Mucosa of descending colon (tissue), 3 donors: ENCODE measurements at regions of chr2 and their contacts with region 1.

Region 1: DNA sequence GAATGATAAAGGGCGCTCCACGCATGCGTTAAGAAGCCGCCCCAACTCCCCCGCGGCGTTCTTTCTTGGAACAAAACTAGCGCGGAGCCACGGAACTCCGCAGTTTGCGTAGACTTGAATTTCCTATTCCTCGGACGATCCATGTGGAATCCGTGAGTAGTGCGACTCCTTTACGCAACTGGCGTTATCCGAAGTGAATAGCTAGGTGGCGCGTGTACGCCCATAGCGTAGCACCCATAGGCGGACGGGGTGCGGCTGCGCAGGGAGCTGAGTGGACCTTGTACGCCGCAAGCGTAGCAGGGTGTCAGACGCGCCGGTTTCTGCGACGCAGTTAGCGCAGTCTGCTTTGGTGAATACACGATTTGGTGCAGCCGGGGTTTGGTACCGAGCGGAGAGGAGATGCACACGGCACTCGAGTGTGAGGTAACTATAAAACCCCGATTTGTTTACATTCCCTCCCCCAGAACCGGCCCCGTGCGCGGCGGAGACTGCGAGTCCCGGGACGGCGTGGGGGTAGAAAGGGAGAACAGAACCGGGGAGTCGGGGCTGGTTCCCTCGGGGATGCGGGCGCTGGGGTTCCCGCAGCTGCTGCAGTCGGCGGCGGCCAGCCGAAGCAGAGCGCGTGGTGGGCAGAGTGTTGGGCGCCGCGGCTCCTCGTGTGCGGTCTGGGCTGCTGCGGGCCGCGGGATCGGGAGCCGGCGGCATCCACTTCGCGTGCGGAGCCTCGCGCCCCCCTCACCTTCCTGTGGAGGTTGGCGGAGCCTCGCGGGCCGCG is at the start of gene SLC39A10:
- DNase-seq: peak; percentile 99
- ATAC-seq: peak; percentile 95
- H3K4me3 ChIP-seq: peak within 1 kb of the TSS; percentile 99
- H3K4me1 ChIP-seq: peaks cover 26% of the 10 kb centered on the region
- CTCF ChIP-seq: peak; percentile 43
- total RNA-seq, gene SLC39A10: 15.3 to 22.6 (median 18.6) TPM

Region 2: DNA sequence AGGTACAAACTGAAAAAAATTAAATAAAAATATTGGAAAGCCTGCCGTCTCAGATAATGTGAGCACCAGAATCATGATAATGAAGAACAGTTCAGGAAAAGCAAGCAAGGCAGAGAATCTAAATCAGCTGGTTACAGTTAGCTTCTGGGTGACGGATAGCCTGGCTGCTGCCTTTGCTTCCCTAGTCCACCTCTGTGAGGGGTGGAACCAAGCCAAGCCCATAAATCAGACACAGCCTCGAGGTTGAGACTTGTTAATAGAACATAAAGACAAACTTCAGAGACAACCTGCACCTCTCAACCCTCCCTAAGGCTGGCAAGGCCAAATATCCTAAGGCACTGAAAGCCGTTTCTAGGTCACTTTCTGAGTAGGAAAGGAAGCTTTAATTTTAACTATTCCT is 334.7 kb before region 1 on chr2:
- intact Hi-C with region 1: loop called in 1 of 2 experiments (anchors 2 kb)
- DNase-seq: peak; percentile 42 to 71 (median 43)
- ATAC-seq: peak; percentile 54
- H3K4me3 ChIP-seq: no peak overlapping the region
- H3K4me1 ChIP-seq: peaks cover 10% of the 10 kb centered on the region
- CTCF ChIP-seq: no peak

Region 3: GRCh38 chr2:195520671-195521155 is 136.3 kb before region 1 on chr2:
- intact Hi-C with region 1: no loop called
- DNase-seq: no peak
- ATAC-seq: no peak
- H3K4me3 ChIP-seq: no peak overlapping the region
- H3K4me1 ChIP-seq: no peaks in the 10 kb centered on the region
- CTCF ChIP-seq: no peak

Region 4: GRCh38 chr2:195575879-195576401 is 81.1 kb before region 1 on chr2:
- intact Hi-C with region 1: loop called in 1 of 2 experiments (anchors 5 kb)
- DNase-seq: no peak
- ATAC-seq: peak; percentile 56
- H3K4me3 ChIP-seq: no peak overlapping the region
- H3K4me1 ChIP-seq: peaks cover 4% of the 10 kb centered on the region
- CTCF ChIP-seq: no peak

Region 5: DNA sequence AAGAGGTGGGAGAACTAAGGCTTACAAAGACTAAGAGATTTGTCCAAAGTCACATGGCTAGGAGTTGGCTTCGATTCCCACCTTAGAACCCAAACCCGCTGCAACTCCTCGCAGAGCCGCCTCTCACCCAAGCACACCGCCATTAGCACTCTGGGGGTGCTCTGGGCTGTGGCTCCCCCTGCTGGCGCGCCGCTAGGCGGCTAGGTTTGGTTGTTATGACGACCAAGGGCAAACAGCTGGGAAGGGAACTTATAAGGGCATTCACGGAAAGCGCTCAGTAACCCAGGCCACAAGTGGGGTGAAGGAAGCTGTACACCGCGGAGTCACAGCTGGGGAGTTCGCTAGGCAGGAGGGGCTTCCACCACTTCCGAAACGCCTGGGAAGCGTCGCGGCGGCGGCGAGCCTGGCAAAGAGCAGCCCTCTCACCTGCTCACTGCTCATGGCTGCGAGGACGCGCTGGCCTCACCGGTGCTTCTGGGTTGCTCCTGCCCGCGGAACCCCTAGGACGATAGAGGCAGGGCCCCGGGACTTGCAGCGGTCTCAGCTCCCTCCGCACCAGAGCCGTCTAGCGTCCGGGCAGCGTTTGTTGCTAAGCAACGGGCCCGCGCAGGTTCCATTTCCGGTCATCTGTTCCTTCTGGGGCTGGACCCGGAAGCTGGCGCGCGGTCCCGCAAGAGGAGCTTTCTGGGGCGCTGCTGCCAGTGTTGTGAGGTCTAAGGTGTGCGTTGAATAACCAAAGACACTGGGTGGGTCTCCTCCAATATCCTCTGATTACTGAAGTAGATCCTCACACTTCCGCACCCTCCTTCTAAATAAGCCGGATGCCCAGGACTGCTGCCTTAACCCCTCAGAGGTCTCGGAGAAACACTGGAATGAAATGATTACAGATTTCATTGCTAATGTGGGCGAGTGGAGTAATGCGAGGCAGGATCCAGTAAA is 411.5 kb after region 1 on chr2 and contains the start of gene DNAH7:
- intact Hi-C with region 1: loop called in 1 of 2 experiments (anchors 5 kb)
- DNase-seq: peak; percentile 94
- ATAC-seq: peak; percentile 98
- H3K4me3 ChIP-seq: peak within 1 kb of the TSS; percentile 83
- H3K4me1 ChIP-seq: peaks cover 6% of the 10 kb centered on the region
- CTCF ChIP-seq: peak; percentile 92
- total RNA-seq, gene DNAH7: 3.0 to 9.3 (median 5.5) TPM